ENCODE measurements at regions of chr16 and their contacts with region 1.

Region 1: GRCh38 chr16:57013229-57013628 is 23.9 kb downstream of the NLRC5 start:
- DNase-seq: no peak
- H3K4me3 Mint-ChIP-seq: no peak overlapping the region
- H3K27ac Mint-ChIP-seq: peak overlapping the region; percentile 97
- H3K4me1 Mint-ChIP-seq: peaks cover 85% of the 10 kb centered on the region
- H3K27me3 Mint-ChIP-seq: no peaks in the 10 kb centered on the region

Region 2: GRCh38 chr16:57000271-57001025 is 12.8 kb before region 1 on chr16:
- CTCF ChIA-PET with region 1: interaction called, 11 read pairs
- intact Hi-C with region 1: loop called (anchors 1 kb)
- DNase-seq: peak; percentile 85
- H3K4me3 Mint-ChIP-seq: peak overlapping the region; percentile 50
- H3K27ac Mint-ChIP-seq: peak overlapping the region; percentile 97
- H3K4me1 Mint-ChIP-seq: peaks cover 92% of the 10 kb centered on the region
- H3K27me3 Mint-ChIP-seq: no peaks in the 10 kb centered on the region

Region 3: GRCh38 chr16:57648590-57649442 is 635.6 kb after region 1 on chr16:
- CTCF ChIA-PET with region 1: no interaction called
- intact Hi-C with region 1: no loop called
- DNase-seq: peak; percentile 93
- H3K4me3 Mint-ChIP-seq: no peak overlapping the region
- H3K27ac Mint-ChIP-seq: peak overlapping the region; percentile 44
- H3K4me1 Mint-ChIP-seq: peaks cover 17% of the 10 kb centered on the region
- H3K27me3 Mint-ChIP-seq: no peaks in the 10 kb centered on the region